ENCODE measurements at regions of chr2 and their contacts with region 1.

Region 1: GRCh38 chr2:236569573-236569973 is at the start of gene ACKR3:
- DNase-seq: peak; percentile 87
- total RNA-seq, gene ACKR3: 36.6 TPM

Region 2: GRCh38 chr2:236240228-236241038 is 329.1 kb before region 1 on chr2:
- intact Hi-C with region 1: loop called (anchors 5 kb)
- DNase-seq: peak; percentile 84

Region 3: DNA sequence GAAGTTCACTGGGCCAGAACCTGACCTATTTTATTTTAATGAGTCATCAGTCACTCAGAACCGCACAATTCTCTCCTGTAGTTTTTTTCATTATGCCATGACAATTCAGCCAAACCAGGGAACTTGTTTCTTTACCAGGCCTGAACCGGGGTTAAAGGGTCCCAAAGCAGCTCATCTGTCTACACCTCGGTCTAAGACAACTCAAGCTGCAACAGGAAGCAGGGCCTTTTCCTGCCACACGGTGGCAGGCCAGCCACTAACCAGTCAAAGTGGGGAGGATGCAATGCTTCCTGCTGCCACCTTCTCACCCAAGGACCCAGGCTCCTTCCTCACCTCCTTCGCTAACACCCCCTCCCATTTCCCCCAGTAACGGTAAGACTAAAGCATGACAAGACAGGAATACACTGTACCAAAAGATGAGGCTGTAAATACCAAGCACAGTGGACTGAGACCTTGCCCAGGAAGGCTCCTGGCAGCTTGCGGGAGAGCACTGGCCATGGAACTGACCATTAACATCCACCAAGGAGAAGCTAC is 56.6 kb before region 1 on chr2:
- intact Hi-C with region 1: loop called (anchors 2 kb)
- DNase-seq: no peak

Region 4: GRCh38 chr2:236663287-236664101 is 93.9 kb after region 1 on chr2:
- intact Hi-C with region 1: loop called (anchors 5 kb)
- DNase-seq: no peak

Region 5: GRCh38 chr2:236720974-236721540 is 151.5 kb after region 1 on chr2:
- intact Hi-C with region 1: no loop called
- DNase-seq: no peak

Region 6: DNA sequence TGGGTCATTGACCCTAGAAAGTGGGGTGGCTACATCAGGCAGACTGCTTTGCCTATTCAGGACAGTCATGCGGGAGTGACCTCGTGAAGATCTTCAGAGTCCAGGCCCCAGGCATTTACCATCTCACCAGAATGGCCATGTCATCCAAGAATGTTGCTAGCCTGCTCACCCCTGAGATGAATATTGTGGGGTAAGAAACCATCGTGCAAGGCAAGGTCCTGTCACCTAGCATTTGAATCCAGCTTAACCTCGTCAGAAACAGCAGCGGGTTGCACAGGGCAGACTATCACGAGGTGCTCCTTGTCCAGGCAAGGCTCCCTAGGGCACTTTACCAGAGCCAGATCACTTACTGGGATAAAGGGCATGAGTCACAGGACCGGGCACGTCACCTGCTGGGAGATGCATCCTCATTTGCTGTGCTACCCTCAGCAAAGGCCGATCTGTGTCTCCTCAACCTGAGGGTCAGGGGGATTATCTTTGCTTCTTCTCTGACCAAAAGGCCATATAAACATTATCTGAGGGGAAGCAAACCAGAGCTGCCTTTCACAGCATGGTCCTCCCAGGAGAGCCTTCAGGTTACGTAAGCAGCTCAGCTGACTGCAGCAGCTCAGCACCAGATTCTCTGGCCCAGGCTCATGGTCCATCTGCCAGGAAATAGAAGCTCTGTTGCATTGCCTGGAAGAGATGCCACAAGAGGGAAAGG is 162.5 kb after region 1 on chr2:
- intact Hi-C with region 1: loop called (anchors 5 kb)
- DNase-seq: no peak

Region 7: DNA sequence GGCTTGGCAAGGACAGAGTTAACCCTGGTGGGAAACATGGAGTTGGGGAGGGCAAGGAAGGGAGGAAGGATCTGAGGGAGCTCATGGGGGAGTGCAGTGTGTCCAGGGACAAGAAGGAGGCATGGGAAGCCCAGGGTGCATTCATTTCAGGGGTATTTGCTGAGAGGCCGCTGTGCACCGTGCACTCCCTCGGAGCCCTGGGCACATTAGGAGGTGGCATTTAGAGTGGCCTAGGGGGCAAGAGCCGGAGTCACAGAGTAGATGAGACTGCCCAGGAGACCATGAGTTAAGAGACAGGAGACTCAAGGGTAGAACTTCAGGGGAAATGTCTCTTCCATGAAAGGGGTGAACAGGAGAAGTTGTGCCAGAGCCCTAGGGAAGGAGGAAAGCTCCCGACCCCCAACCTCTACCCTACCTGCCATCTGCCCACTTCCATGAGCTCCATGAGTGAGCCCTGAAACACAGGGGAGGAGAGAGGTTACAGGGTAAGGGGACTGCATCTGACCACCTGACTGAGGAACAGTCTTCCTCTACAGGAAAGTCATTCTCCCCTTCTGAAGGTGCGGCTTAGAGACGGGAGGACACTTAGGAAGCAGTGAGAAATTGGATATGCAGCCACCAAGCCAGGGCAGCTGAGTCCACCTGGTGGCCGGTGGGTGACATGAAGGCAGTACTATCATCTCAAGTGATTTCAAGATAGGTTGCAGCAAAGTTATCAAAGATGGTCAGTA is 457.6 kb after region 1 on chr2:
- intact Hi-C with region 1: loop called (anchors 5 kb)
- DNase-seq: peak; percentile 82

Measured in cardiac septum (tissue), 1 donor.